Posterior vena cava (tissue), 2 donors: ENCODE measurements at regions of chr10 and their contacts with region 1.

Region 1: DNA sequence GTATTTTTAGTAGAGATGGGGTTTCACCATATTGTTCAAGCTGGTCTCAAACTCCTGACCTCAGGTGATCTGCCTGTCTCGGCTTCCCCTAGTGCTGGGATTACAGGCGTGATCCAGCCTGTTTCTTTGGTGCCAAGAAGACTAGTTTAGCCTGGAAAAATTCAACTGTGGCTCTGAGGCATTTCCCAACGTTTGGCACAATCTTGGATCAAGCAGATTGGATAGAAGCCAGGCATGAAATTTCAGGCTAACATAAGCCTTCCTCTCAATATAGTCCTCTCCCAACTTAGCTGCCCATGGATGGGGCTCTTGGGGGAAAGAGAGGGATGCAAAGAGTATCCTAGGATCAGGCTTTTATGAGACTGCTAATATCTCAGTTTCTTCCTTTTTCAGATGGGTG is 53.8 kb downstream of the APBB1IP start:
- DNase-seq: no peak

Region 2: GRCh38 chr10:24873281-24873683 is 1618.7 kb before region 1 on chr10:
- intact Hi-C with region 1: loop called in 1 of 2 experiments (anchors 10 kb)
- DNase-seq: no peak

Region 3: GRCh38 chr10:26474026-26474425 is 17.9 kb before region 1 on chr10:
- intact Hi-C with region 1: no loop called
- DNase-seq: no peak